Naive thymus-derived CD8-positive, alpha-beta T cell (primary cell): ENCODE measurements at regions of chr19 and their contacts with region 1.

Region 1: DNA sequence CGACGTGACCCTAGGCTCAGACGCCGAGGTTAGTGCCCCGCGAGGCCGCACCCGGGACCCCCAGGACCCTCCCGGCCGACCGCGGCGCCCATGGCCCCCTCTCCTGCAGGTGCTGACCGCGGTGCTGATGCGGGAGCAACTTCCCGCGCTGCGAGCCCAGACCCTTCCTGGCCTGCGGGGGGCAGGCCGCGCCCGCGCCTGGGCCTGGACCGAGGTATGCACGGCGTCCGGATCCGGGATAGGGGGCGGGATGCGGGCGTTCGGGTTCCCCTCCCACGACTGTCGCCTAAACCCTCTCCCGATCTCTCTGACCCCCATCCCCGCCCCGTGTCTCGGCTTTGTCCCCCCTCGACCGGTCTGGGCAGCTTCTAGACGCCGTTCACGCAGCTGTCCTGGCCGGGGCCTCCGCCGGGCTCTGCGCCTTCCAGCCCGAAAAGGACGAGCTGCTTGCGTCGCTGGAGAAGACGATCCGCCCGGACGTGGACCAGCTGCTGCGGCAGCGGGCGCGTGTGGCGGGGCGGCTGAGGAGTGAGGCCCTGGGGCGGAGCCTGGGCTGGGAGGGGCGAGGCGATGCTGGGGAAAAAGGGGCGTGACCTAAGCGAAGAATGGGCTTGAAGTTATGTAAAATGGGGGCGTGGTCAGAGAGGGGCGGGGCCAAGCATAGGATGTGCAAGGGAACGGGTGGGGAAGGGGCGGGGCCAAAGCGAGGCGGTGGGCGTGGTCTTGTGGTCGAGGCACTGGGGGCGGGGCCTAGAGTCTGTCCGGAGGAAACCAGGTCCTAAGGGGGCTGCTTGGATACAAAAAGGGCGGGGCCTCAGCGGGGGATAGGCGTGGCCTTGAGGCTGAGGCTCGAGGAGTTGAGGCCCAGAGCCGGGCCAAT is 16.0 kb upstream of the COLGALT1 start:
- DNase-seq: peak; percentile 93 to 99 (median 96)
- ATAC-seq: peak; percentile 92 to 93
- H3K4me3 Mint-ChIP-seq: peak overlapping the region; percentile 81 to 94 (median 86)
- H3K27ac Mint-ChIP-seq: peak overlapping the region; percentile 37 to 87 (median 72)
- H3K4me1 Mint-ChIP-seq: peaks cover 15 to 29% (median 18%) of the 10 kb centered on the region in 4 donors
- H3K27me3 Mint-ChIP-seq: no peaks in the 10 kb centered on the region

Region 2: DNA sequence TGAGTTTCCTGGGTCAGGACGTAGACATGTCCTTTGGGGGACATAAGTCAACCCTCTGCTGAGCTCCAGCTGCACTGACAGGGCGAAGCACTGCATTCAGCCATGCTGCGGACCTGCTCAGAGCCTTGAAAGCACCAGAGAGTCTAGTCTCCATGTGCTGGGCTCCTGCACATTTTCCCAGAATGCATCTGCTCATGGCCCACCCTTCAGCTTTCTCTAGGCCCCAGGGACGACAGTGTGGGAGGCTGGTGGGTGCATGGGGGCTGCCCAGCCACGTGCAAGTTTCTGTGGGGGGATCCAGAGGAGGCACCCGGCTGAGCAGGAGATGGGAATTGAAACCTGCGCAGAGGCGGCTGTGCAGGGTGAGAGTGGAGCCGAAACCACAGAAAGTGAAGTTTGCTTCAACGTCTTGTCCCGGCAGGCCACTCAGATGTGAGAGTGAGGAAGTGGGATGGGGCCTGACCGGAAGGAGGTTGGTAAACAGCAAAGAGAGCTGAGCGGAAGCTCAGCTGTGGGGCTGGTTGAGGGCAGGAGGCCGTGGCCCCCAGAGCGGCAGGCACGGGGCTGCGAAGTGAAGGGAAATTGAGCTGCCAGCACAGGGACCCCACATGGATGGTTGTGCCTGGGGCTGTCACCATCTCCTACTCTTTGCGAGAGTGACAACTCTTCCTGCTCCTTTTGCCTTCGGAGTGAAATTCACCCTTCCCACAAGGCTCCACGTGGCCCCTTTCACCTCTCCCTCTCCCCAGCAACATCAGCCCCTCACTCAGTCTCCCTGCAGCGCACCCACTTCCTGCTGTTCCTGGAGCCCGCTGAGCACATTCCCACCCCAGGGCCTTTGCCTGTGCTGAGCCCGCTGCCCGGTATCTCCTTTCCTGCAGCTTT is 16.2 kb before region 1 on chr19:
- POLR2A ChIA-PET with region 1: interaction called, 52 read pairs
- DNase-seq: peak in 9 of 10 donors; percentile 7 to 75 (median 54)
- ATAC-seq: peak; percentile 76 to 82
- H3K4me3 Mint-ChIP-seq: peak overlapping the region; percentile 65 to 87 (median 78)
- H3K27ac Mint-ChIP-seq: peak overlapping the region; percentile 92 to 98 (median 96)
- H3K4me1 Mint-ChIP-seq: peaks cover 20 to 56% (median 43%) of the 10 kb centered on the region in 4 donors
- H3K27me3 Mint-ChIP-seq: no peaks in the 10 kb centered on the region

Region 3: DNA sequence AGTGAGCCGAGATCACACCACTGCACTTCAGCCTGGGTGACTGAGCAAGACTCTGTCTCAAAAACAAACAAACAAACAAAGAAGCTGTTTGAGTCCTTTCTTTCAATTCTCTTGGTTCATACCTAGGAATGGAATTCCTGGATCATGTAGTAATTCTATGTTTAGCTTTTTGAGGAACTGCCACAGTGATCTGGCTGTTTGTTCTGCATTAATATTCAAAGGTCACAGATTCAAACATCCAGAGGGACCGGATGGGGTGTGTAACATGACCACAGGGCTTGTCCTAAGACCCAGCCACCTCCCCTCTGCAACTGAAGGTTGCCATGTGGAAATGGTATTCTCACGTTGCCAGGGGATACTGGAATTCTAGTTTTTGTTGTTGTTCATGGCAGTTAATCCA is 26.1 kb after region 1 on chr19:
- POLR2A ChIA-PET with region 1: no interaction called
- DNase-seq: no peak
- ATAC-seq: no peak
- H3K4me3 Mint-ChIP-seq: no peak overlapping the region
- H3K27ac Mint-ChIP-seq: no peak overlapping the region
- H3K4me1 Mint-ChIP-seq: peaks cover 0 to 8% (median 3%) of the 10 kb centered on the region in 4 donors
- H3K27me3 Mint-ChIP-seq: no peaks in the 10 kb centered on the region